CD4-positive, alpha-beta memory T cell (primary cell): ENCODE measurements at regions of chr13 and their contacts with region 1.

Region 1: DNA sequence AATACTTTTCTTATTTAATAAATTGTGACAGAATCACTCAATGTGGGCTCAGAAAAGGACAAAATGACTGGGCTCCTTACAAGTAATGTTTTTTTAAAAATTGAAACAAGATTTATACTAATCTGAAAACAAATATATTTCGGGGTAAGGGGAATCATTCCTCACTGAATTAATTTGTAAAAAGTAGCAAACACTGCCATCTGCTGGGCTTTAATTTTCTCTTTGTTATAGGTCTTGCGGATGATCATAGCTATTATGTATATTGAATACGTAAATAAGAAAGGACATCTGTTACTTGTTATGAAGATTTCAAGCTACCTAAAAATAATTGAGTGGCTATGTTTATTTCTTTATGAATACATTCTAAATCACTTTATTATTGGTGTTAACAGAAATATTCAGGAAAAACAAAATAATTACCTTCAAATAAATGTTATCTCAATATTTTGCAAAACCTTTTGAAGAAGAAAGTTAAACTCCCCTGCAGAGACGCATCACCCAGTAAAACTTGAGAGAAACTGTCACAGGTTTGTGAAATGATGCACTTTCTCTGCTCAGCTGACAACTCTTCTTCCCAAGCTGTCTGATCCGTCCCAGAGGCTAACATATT is 17.8 kb upstream of the ENOX1 start:
- DNase-seq: peak in 4 of 5 donors; percentile 33 to 42 (median 38)
- H3K4me3 ChIP-seq: no peak overlapping the region
- H3K4me3 Mint-ChIP-seq: no peak overlapping the region
- H3K27ac ChIP-seq: no peak overlapping the region
- H3K27ac Mint-ChIP-seq: no peak overlapping the region
- H3K4me1 ChIP-seq: no peaks in the 10 kb centered on the region
- H3K4me1 Mint-ChIP-seq: peaks cover 0 to 3% (median 0%) of the 10 kb centered on the region in 4 donors
- H3K27me3 ChIP-seq: no peaks in the 10 kb centered on the region
- H3K27me3 Mint-ChIP-seq: peaks cover 3 to 8% of the 10 kb centered on the region in 2 donors

Region 2: DNA sequence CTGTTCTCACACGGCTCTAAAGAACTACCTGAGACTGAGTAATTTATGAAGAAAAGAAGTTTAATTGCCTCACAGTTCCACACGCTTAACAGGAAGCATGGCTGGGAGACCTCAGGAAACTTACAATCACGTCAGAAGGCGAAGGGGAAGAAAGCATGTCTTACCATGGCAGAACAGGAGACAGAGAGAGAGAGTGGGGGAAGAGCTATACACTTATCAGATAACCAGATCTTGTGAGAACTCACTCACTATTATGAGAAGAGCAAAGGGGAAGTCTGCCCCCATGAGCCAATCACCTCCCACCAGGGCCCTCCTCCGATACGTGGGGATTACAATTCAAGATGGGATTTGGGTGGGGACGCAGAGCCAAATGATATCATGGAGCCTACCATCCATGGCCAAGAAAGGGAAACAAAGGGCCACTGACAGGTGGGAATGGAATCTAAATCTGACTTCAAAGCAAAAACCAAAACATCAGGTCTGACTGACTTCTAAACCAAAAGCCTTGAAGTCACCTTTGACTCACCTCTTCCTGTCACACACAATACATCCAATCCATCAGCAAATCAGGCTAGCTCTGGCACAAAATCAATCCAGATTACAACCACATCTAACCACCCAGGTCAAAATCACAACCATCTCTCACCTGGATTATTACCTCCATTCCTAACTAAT is 207.5 kb before region 1 on chr13:
- CTCF ChIA-PET with region 1: no interaction called
- POLR2A ChIA-PET with region 1: no interaction called
- intact Hi-C with region 1: no loop called
- DNase-seq: no peak
- H3K4me3 ChIP-seq: no peak overlapping the region
- H3K4me3 Mint-ChIP-seq: peak overlapping the region in 1 of 8 donors; percentile 9
- H3K27ac ChIP-seq: no peak overlapping the region
- H3K27ac Mint-ChIP-seq: no peak overlapping the region
- H3K4me1 ChIP-seq: no peaks in the 10 kb centered on the region
- H3K4me1 Mint-ChIP-seq: peaks cover 0 to 5% (median 0%) of the 10 kb centered on the region in 4 donors
- H3K27me3 ChIP-seq: no peaks in the 10 kb centered on the region
- H3K27me3 Mint-ChIP-seq: no peaks in the 10 kb centered on the region

Region 3: GRCh38 chr13:43792076-43792881 is 12.3 kb before region 1 on chr13:
- CTCF ChIA-PET with region 1: interaction called, 11 read pairs
- POLR2A ChIA-PET with region 1: interaction called, 3 read pairs
- intact Hi-C with region 1: no loop called
- DNase-seq: no peak
- H3K4me3 ChIP-seq: no peak overlapping the region
- H3K4me3 Mint-ChIP-seq: no peak overlapping the region
- H3K27ac ChIP-seq: no peak overlapping the region
- H3K27ac Mint-ChIP-seq: no peak overlapping the region
- H3K4me1 ChIP-seq: peaks cover 4% of the 10 kb centered on the region
- H3K4me1 Mint-ChIP-seq: peaks cover 3 to 9% (median 8%) of the 10 kb centered on the region in 4 donors
- H3K27me3 ChIP-seq: peaks cover 4% of the 10 kb centered on the region
- H3K27me3 Mint-ChIP-seq: peaks cover 26 to 33% of the 10 kb centered on the region in 2 donors

Region 4: DNA sequence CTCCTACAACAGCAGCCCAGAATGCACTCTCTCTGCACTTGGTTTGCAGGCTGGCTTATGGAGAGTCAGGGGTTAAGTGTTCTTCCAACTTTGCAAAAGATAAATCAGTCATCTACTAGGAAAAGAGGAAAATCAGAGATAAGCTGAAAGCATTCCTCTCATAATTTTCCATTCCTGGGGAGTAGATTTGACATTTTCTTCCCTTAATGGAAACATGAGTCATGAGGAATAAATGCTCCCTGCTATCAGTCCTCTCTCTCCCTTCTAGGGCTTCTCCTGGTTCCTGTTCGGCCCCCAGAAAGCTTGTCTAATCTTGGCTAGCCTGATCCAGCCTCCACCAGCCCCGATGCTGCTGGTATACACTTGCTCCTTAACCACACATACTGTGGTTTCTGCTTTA is 10.6 kb after region 1 on chr13:
- CTCF ChIA-PET with region 1: interaction called, 21 read pairs
- POLR2A ChIA-PET with region 1: no interaction called
- intact Hi-C with region 1: no loop called
- DNase-seq: no peak
- H3K4me3 ChIP-seq: no peak overlapping the region
- H3K4me3 Mint-ChIP-seq: no peak overlapping the region
- H3K27ac ChIP-seq: no peak overlapping the region
- H3K27ac Mint-ChIP-seq: no peak overlapping the region
- H3K4me1 ChIP-seq: no peaks in the 10 kb centered on the region
- H3K4me1 Mint-ChIP-seq: no peaks in the 10 kb centered on the region
- H3K27me3 ChIP-seq: no peaks in the 10 kb centered on the region
- H3K27me3 Mint-ChIP-seq: peaks cover 18 to 19% of the 10 kb centered on the region in 2 donors